Body of pancreas (tissue), 4 donors: ENCODE measurements at regions of chr3 and their contacts with region 1.

Region 1: GRCh38 chr3:78666470-78666800 is 1101.4 kb downstream of the ROBO1 start:
- DNase-seq: no peak
- ATAC-seq: no peak
- H3K4me3 ChIP-seq: no peak overlapping the region
- H3K27ac ChIP-seq: no peak overlapping the region
- H3K4me1 ChIP-seq: no peaks in the 10 kb centered on the region
- H3K27me3 ChIP-seq: no peaks in the 10 kb centered on the region
- CTCF ChIP-seq: no peak
- POLR2A ChIP-seq: no peak

Region 2: GRCh38 chr3:79047581-79047980 is 381.1 kb after region 1 on chr3:
- intact Hi-C with region 1: loop called (anchors 5 kb)
- DNase-seq: no peak
- ATAC-seq: no peak
- H3K4me3 ChIP-seq: no peak overlapping the region
- H3K27ac ChIP-seq: no peak overlapping the region
- H3K4me1 ChIP-seq: no peaks in the 10 kb centered on the region
- H3K27me3 ChIP-seq: no peaks in the 10 kb centered on the region
- CTCF ChIP-seq: no peak
- POLR2A ChIP-seq: no peak

Region 3: DNA sequence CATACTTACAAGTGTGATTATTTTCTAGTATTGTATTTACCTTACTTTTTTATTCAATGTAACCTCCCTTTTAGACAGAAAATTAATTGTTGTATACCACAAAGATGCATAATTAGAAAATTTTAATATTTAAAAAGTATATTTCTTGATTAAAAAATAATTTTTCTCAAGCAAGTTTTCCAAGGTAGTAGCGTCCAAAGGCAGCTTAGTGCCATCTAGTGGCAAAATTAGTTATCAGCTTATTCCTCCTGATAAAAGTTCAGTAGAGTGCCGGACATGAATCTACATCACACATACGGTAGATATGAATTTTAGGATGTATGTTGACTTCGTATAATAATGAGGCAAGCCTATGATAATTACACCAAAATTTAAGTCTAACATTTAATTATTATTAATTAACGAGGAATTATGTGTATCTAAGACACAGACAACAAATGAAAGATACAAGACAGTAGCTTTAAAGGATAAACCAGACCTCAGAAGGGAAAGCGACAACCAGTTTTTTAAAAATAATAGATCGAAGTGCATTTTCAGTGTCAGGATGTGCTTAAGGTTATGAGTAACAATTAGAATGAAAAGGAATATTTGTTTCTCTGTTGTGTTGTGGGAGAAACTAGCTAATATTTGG is 695.4 kb after region 1 on chr3:
- intact Hi-C with region 1: loop called (anchors 10 kb)
- DNase-seq: no peak
- ATAC-seq: peak; percentile 52
- H3K4me3 ChIP-seq: no peak overlapping the region
- H3K27ac ChIP-seq: no peak overlapping the region
- H3K4me1 ChIP-seq: no peaks in the 10 kb centered on the region
- H3K27me3 ChIP-seq: peaks cover 0 to 8% of the 10 kb centered on the region in 2 donors
- CTCF ChIP-seq: peak; percentile 42 to 85 (median 55)
- POLR2A ChIP-seq: no peak